ENCODE measurements at regions of chr16 and their contacts with region 1.

Region 1: DNA sequence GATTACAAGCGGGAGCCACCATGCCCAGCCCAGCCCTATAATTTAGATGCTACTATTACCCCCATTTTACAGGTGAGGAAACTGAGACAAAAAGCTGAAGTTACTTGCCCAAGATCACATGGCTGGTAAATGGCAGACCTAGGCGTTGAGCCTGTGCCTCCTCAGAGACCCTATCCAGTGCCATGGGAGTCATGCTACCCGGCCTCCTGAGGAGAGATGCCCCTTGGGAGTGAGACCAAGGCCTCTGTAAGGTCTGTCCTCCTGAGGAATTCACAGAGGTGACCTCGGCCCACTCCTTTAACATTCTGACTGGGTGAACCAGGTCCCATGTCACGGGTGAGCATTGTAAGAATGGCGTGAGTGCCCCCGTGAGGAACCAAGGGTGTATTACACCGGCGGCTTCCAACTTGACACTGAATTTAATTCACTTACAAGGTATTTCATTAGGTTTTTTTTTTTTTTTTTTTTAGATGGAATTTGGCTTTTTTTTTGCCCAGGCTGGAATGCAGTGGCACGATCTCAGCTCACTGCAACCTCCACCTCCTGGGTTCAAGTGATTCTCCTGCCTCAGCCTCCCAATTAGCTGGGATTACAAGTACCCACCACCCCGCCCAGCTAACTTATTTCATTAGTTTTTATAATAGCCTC is 95.7 kb downstream of the ABCC6 start:
- DNase-seq: no peak
- ATAC-seq: peak; percentile 82

Region 2: GRCh38 chr16:15874745-15875314 is 252.8 kb before region 1 on chr16:
- intact Hi-C with region 1: loop called (anchors 1 kb)
- DNase-seq: no peak
- ATAC-seq: peak; percentile 56

Region 3: GRCh38 chr16:16062023-16062932 is 65.3 kb before region 1 on chr16:
- intact Hi-C with region 1: no loop called
- DNase-seq: no peak
- ATAC-seq: peak; percentile 81

Measured in Right ventricle myocardium inferior (tissue), 1 donor.